ENCODE measurements at regions of chr1 and their contacts with region 1.

Region 1: GRCh38 chr1:27044613-27045151 is 32.0 kb upstream of the TENT5B start:
- DNase-seq: peak; percentile 78 to 95 (median 90)
- H3K4me3 ChIP-seq: peak overlapping the region in 1 of 4 donors; percentile 10
- H3K27ac ChIP-seq: no peak overlapping the region
- H3K4me1 ChIP-seq: peaks cover 4 to 13% of the 10 kb centered on the region in 2 donors
- H3K27me3 ChIP-seq: no peaks in the 10 kb centered on the region
- CTCF ChIP-seq: peak; percentile 94 to 99 (median 98)
- POLR2A ChIP-seq: no peak

Region 2: DNA sequence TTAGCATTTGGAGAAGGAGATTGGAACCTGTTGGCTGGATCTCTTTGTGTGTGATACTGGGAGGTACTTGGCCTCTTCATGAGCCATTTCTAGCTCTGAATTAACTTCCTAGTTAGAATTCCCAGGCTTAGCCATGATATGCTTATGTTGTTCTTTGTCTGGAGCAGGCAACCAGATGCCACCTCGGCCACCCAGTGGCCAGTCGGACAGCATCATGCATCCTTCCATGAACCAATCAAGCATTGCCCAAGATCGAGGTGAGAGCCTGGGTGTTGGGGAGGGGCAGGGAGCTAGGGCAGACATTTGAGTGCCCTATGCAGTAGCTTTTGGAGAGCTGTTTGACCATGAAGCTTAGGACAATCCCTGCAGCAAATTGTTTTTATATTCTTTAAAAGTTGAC is 283.5 kb before region 1 on chr1:
- intact Hi-C with region 1: no loop called
- DNase-seq: no peak
- H3K4me3 ChIP-seq: no peak overlapping the region
- H3K27ac ChIP-seq: no peak overlapping the region
- H3K4me1 ChIP-seq: no peaks in the 10 kb centered on the region
- H3K27me3 ChIP-seq: no peaks in the 10 kb centered on the region
- CTCF ChIP-seq: no peak
- POLR2A ChIP-seq: no peak

Region 3: DNA sequence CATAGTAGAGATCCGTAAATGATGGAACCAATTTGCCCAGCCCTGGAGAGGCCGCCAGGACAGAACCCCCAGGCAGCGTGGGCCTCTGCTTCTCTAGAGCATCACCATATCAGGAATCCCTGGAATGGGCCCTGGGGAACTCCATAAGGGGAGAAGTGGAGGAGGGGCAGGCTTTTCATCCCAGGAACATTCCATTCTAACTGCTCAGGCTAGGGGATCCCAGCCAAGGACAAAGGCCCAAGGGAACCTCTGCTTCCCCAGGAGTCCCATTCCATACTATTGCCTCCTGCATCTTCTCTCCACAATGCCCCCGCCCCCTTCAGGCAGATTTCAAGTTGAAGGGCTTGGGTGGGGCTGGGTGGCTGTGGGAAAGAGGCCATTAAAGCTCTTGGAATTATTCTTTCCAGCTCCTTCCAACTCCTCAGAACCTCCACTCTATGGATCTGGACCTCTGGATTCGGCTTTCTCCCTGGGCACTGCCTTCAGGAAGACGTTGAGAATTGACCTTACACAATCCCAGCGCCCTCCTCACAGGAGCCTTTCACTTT is 45.2 kb before region 1 on chr1:
- intact Hi-C with region 1: loop called in 1 of 2 experiments (anchors 5 kb)
- DNase-seq: peak in 6 of 7 donors; percentile 58 to 87 (median 70)
- H3K4me3 ChIP-seq: no peak overlapping the region
- H3K27ac ChIP-seq: peak overlapping the region in 3 of 5 donors; percentile 49 to 87 (median 57)
- H3K4me1 ChIP-seq: peaks cover 0 to 18% of the 10 kb centered on the region in 2 donors
- H3K27me3 ChIP-seq: no peaks in the 10 kb centered on the region
- CTCF ChIP-seq: no peak
- POLR2A ChIP-seq: no peak

Region 4: DNA sequence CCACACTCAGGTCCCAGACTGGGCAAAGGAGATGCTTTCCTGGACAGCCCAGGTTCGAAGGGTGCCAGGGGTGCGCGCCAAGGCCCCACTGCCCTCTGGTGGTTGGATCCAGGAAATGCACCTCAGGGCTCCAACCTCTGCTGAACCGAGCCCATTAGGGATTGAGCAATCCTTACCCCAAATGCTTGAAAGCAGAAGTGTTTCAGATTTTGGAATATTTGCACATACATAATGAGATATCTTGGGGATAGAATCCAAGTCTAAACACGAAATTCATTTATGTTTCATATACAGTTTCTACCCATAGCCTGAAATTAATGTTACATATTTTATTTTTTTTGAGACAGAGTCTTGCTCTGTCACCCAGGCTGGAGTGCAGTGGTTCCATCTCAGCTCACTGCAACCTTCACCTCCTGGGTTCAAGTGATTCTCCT is 52.8 kb after region 1 on chr1:
- intact Hi-C with region 1: loop called (anchors 2 kb)
- DNase-seq: peak; percentile 77 to 92 (median 83)
- H3K4me3 ChIP-seq: no peak overlapping the region
- H3K27ac ChIP-seq: no peak overlapping the region
- H3K4me1 ChIP-seq: peaks cover 6 to 14% of the 10 kb centered on the region in 2 donors
- H3K27me3 ChIP-seq: no peaks in the 10 kb centered on the region
- CTCF ChIP-seq: peak; percentile 97 to 99 (median 98)
- POLR2A ChIP-seq: no peak

Region 5: GRCh38 chr1:27292106-27292505 is 247.4 kb after region 1 on chr1:
- intact Hi-C with region 1: loop called in 1 of 2 experiments (anchors 5 kb)
- DNase-seq: peak in 2 of 7 donors; percentile 18 to 46
- H3K4me3 ChIP-seq: no peak overlapping the region
- H3K27ac ChIP-seq: no peak overlapping the region
- H3K4me1 ChIP-seq: no peaks in the 10 kb centered on the region
- H3K27me3 ChIP-seq: no peaks in the 10 kb centered on the region
- CTCF ChIP-seq: no peak
- POLR2A ChIP-seq: no peak